AG04450 (cell line): ENCODE measurements at regions of chr11 and their contacts with region 1.

Region 1: GRCh38 chr11:111460856-111461255 is 51.3 kb downstream of the BTG4 start:
- DNase-seq: no peak
- H3K4me3 ChIP-seq: no peak overlapping the region
- H3K27ac ChIP-seq: peak overlapping the region; percentile 1
- H3K27me3 ChIP-seq: peaks cover 3% of the 10 kb centered on the region
- CTCF ChIP-seq: no peak

Region 2: DNA sequence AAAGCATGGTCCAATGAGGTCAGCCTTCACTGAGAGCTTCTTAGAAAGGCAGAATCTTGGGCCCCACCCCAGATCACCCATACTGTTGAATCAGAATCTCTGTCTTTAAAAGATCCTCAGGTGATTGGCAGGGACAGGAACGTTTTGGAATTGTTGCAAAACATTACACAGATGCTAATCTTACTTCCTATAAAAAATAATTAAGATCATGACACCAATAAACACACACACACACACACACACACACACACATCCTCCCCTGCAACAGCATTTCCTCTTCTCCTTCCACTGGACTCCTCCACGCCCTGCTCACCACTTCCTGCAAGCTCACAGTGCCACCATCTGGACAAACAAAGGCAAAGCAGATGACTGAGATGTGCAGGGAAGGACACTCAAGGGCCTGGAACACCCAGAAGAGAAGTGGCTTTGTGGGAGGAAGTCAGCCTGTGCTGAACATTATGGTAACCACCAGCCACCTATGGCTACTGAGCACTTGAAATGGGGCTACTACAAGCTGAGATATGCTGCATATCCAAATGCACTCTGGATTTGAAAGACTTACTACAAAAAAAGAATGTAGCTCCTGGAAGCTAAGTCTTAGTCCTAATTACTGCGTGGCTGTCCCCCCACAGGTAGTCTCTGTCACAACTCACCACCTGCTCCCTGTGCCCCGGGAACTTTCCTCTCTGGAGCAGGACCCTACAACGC is 14.3 kb before region 1 on chr11:
- CTCF ChIA-PET with region 1: interaction called, 13 read pairs
- POLR2A ChIA-PET with region 1: no interaction called
- DNase-seq: peak; percentile 89
- H3K4me3 ChIP-seq: no peak overlapping the region
- H3K27ac ChIP-seq: no peak overlapping the region
- H3K27me3 ChIP-seq: no peaks in the 10 kb centered on the region
- CTCF ChIP-seq: peak; percentile 95